AG04449 (cell line): ENCODE measurements at regions of chr13 and their contacts with region 1.

Region 1: GRCh38 chr13:20869542-20869941 is 33.0 kb downstream of the XPO4 start:
- DNase-seq: no peak
- H3K4me3 ChIP-seq: no peak overlapping the region
- CTCF ChIP-seq: no peak

Region 2: GRCh38 chr13:20713751-20714150 is 155.8 kb before region 1 on chr13:
- CTCF ChIA-PET with region 1: interaction called, 14 read pairs
- POLR2A ChIA-PET with region 1: no interaction called
- DNase-seq: no peak
- H3K4me3 ChIP-seq: no peak overlapping the region
- CTCF ChIP-seq: no peak